ENCODE measurements at regions of chr5 and their contacts with region 1.

Region 1: DNA sequence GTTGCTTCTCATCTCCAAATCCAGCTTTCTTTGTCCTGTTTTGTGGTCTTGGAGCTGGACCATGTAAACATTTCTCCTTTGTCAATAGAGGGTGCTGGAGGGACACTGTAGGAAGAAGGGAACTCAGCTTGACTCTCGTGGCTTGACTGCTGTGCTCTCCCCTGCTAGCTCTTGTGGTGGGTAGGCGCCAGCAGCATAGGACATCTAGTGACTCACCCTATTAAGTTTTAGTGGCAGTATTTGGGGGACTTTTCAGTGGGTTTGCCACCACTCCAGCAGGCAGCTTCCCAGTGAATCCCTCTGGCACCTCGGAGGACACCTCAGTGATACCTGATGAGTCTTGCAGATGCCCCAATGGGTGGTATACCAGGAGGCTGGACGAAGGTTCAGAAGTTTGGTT is 97.8 kb downstream of the TSSK1B start:
- DNase-seq: no peak
- H3K4me3 ChIP-seq: no peak overlapping the region
- H3K27ac ChIP-seq: no peak overlapping the region
- H3K4me1 ChIP-seq: peaks cover 11% of the 10 kb centered on the region
- H3K27me3 ChIP-seq: no peaks in the 10 kb centered on the region
- CTCF ChIP-seq: peak; percentile 65

Region 2: DNA sequence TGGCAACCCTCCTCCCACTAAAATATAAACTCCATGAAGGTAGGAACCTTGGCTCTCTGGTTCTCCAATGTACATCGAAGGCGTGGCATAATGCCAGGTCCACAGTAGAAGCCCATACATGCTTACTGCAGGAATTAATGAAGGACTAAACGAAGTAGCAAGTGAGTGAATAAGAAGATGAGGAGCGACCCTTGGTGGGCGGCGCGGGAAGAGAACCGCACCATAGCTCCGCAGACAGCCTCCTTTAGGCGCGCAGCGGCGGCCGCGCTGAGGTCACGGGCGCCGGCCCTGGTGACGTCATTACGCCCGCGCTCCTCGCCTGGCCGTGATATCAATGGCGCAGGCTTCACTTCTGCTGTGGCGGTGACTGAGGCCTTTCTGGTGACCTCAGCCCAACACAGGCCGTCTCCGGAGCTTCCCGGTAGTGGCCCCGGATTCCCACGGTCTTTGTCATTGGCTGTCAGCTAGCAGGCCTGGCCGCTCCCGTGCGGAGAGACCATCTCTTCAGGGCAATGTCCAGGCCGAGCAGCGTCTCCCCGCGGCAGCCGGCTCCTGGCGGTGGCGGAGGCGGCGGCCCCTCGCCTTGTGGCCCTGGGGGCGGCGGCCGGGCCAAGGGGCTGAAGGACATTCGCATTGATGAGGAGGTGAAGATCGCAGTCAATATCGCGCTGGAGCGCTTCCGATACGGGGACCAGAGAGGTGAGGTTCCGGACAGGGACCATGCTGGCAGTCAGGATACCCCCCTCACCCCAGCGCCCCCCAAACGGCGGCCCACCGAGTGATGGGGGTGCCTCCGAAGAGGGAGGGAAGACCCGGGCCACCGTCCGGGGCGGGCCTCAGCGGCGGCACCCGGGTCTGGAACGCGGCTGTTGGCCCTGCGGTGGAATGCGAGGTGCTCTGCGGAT is 176.7 kb after region 1 on chr5 and contains the start of gene YTHDC2:
- intact Hi-C with region 1: loop called (anchors 5 kb)
- DNase-seq: peak; percentile 89
- H3K4me3 ChIP-seq: peak within 1 kb of the TSS; percentile 79
- H3K27ac ChIP-seq: peak within 1 kb of the TSS; percentile 92
- H3K4me1 ChIP-seq: peaks cover 41% of the 10 kb centered on the region
- H3K27me3 ChIP-seq: no peaks in the 10 kb centered on the region
- CTCF ChIP-seq: peak; percentile 42
- total RNA-seq, gene YTHDC2: 13.6 TPM